Panc1 (cell line): ENCODE measurements at regions of chr17 and their contacts with region 1.

Region 1: DNA sequence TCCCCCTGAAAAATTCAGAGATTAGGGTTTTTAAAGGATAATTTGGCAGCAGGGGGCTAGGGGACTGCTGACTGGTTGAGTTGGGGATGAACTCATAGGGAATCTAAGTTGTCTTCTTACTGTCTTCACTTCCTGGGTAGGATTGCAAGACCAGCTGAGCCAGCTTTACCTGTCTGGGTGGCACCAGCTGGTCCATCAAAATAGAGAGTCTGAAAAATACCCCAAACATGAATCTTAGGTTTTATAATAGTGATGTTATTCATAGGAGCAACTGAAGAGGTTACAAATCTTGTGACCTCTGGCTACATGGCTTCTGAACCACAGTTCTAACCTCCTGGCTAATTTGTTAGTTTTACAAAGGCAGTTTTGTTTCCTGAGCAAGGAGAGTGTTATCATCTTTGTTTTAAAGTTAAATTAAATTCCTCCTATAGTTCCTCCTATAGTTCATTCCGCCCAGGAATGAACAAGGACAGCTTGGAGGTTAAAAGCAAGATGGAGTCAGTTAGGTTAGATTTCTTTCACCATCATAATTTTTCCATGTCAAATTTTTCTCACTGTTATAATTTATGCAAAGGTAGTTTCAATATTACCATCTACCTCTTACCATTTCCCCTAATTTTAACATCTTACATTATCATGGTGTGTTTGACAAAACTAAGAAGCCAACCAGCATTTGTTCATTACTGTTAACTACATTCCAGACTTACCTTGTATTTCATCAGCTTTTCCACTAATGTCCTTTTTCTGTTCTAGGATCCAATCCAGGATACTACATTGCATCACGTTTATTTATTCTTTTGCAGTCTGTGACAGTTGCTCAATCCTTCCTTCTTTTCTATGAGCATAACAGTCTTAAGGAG is 158.2 kb downstream of the PPM1E start:
- DNase-seq: no peak
- ATAC-seq: no peak
- H3K4me3 ChIP-seq: no peak overlapping the region
- H3K27ac ChIP-seq: no peak overlapping the region
- H3K4me1 ChIP-seq: no peaks in the 10 kb centered on the region
- H3K27me3 ChIP-seq: no peaks in the 10 kb centered on the region
- CTCF ChIP-seq: no peak

Region 2: GRCh38 chr17:58947824-58948223 is 34.0 kb after region 1 on chr17:
- CTCF ChIA-PET with region 1: no interaction called
- POLR2A ChIA-PET with region 1: interaction called, 13 read pairs
- in situ Hi-C with region 1: no loop called
- intact Hi-C with region 1: no loop called
- DNase-seq: no peak
- ATAC-seq: no peak
- H3K4me3 ChIP-seq: no peak overlapping the region
- H3K27ac ChIP-seq: no peak overlapping the region
- H3K4me1 ChIP-seq: no peaks in the 10 kb centered on the region
- H3K27me3 ChIP-seq: no peaks in the 10 kb centered on the region
- CTCF ChIP-seq: no peak

Region 3: DNA sequence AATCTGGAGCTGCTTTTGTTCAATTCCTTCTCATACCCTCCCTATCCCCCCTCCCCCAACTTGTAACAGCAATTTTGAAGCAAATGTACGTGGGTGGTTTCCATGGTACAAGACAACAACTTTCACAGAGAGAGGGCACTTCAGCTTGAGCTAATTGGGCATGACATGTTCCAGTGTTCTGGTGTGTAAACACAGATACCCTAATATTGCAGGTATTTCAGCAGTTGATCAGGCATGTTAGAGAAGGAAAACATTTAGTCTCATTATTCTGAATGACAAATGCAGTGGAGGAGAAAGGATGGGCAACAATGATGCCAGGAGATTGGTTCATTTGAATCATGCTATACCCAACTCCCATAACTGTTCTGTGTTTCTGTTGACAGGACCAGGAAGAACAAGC is 55.3 kb after region 1 on chr17:
- CTCF ChIA-PET with region 1: no interaction called
- POLR2A ChIA-PET with region 1: no interaction called
- in situ Hi-C with region 1: no loop called
- intact Hi-C with region 1: no loop called
- DNase-seq: no peak
- ATAC-seq: no peak
- H3K4me3 ChIP-seq: no peak overlapping the region
- H3K27ac ChIP-seq: no peak overlapping the region
- H3K4me1 ChIP-seq: no peaks in the 10 kb centered on the region
- H3K27me3 ChIP-seq: no peaks in the 10 kb centered on the region
- CTCF ChIP-seq: no peak